Endothelial cell of umbilical vein (primary cell): ENCODE measurements at regions of chr2 and their contacts with region 1.

Region 1: GRCh38 chr2:83081826-83082690 is 1377.0 kb downstream of the SUCLG1 start:
- DNase-seq: peak; percentile 100
- H3K4me3 ChIP-seq: peak overlapping the region in 1 of 3 experiments; percentile 28
- H3K27ac ChIP-seq: peak overlapping the region; percentile 94
- H3K4me1 ChIP-seq: peaks cover 25% of the 10 kb centered on the region
- H3K27me3 ChIP-seq: no peaks in the 10 kb centered on the region
- CTCF ChIP-seq: no peak
- POLR2A ChIP-seq: peak; percentile 67

Region 2: GRCh38 chr2:82599021-82599420 is 483.0 kb before region 1 on chr2:
- CTCF ChIA-PET with region 1: no interaction called
- POLR2A ChIA-PET with region 1: no interaction called
- dilution Hi-C with region 1: no loop called
- intact Hi-C with region 1: loop called (anchors 5 kb)
- DNase-seq: no peak
- H3K4me3 ChIP-seq: no peak overlapping the region
- H3K27ac ChIP-seq: no peak overlapping the region
- H3K4me1 ChIP-seq: no peaks in the 10 kb centered on the region
- H3K27me3 ChIP-seq: no peaks in the 10 kb centered on the region
- CTCF ChIP-seq: no peak
- POLR2A ChIP-seq: no peak

Region 3: DNA sequence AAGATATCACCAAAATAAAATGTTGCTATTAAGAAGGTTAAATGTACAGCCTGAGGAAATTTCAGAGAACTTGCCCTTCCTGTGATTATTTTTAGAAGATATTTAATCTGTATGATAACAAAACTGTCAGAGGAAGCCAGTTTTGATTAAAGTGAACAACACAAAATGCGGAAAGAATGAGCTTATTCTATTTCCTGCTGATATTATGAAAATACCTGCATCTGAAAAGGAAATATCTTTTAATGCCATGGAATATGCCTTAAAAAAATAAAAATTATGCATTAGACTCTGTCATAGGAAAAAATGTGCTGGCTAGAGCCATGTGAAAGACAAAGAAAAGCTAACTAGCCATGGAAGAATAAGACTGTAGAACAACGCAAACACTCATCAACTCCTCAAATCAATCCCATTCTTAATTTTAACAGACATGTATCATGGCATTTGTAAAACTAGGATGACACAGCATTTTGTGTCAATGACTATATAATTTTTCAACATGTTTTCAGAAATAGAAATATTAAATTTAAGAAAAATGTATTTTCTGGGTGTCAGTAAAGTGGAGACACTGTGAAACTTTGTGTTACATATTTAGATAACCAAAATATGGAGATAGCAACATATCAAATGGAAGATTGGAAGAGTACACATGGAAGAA is 391.2 kb before region 1 on chr2:
- CTCF ChIA-PET with region 1: interaction called, 8 read pairs
- POLR2A ChIA-PET with region 1: no interaction called
- dilution Hi-C with region 1: no loop called
- intact Hi-C with region 1: loop called (anchors 1 kb)
- DNase-seq: peak; percentile 93
- H3K4me3 ChIP-seq: no peak overlapping the region
- H3K27ac ChIP-seq: peak overlapping the region; percentile 68
- H3K4me1 ChIP-seq: peaks cover 34% of the 10 kb centered on the region
- H3K27me3 ChIP-seq: no peaks in the 10 kb centered on the region
- CTCF ChIP-seq: no peak
- POLR2A ChIP-seq: peak; percentile 41

Region 4: GRCh38 chr2:82939211-82939610 is 142.8 kb before region 1 on chr2:
- CTCF ChIA-PET with region 1: no interaction called
- POLR2A ChIA-PET with region 1: no interaction called
- dilution Hi-C with region 1: no loop called
- intact Hi-C with region 1: no loop called
- DNase-seq: no peak
- H3K4me3 ChIP-seq: no peak overlapping the region
- H3K27ac ChIP-seq: no peak overlapping the region
- H3K4me1 ChIP-seq: no peaks in the 10 kb centered on the region
- H3K27me3 ChIP-seq: no peaks in the 10 kb centered on the region
- CTCF ChIP-seq: no peak
- POLR2A ChIP-seq: no peak

Region 5: GRCh38 chr2:83055338-83056010 is 26.6 kb before region 1 on chr2:
- CTCF ChIA-PET with region 1: interaction called, 4 read pairs
- POLR2A ChIA-PET with region 1: interaction called, 3 read pairs
- dilution Hi-C with region 1: no loop called
- intact Hi-C with region 1: loop called (anchors 1 kb)
- DNase-seq: peak; percentile 93
- H3K4me3 ChIP-seq: peak overlapping the region in 1 of 3 experiments; percentile 15
- H3K27ac ChIP-seq: peak overlapping the region; percentile 97
- H3K4me1 ChIP-seq: peaks cover 36% of the 10 kb centered on the region
- H3K27me3 ChIP-seq: no peaks in the 10 kb centered on the region
- CTCF ChIP-seq: no peak
- POLR2A ChIP-seq: no peak

Region 6: DNA sequence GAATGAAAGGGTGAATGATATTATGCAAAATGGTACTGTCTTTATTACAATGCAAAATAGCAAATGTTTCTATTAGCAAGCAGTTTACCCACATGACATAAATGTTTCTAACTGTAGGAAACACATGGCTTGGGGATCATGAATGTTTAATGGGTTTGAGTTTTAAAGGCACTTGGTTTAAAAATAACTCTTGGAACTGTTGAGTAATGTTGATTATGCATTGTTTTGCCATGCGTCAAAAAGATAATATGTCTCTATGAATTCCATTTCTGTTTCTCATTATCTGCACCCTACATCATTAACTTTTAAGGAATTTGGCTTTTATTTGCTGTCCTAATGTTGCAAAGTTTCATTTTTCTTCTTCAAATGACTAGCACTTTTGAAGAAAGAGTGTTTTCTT is 21.5 kb after region 1 on chr2:
- CTCF ChIA-PET with region 1: interaction called, 3 read pairs
- POLR2A ChIA-PET with region 1: no interaction called
- dilution Hi-C with region 1: no loop called
- intact Hi-C with region 1: loop called (anchors 1 kb)
- DNase-seq: peak; percentile 91
- H3K4me3 ChIP-seq: no peak overlapping the region
- H3K27ac ChIP-seq: peak overlapping the region; percentile 86
- H3K4me1 ChIP-seq: peaks cover 24% of the 10 kb centered on the region
- H3K27me3 ChIP-seq: no peaks in the 10 kb centered on the region
- CTCF ChIP-seq: no peak
- POLR2A ChIP-seq: no peak

Region 7: GRCh38 chr2:83323038-83323437 is 241.0 kb after region 1 on chr2:
- CTCF ChIA-PET with region 1: no interaction called
- POLR2A ChIA-PET with region 1: no interaction called
- dilution Hi-C with region 1: no loop called
- intact Hi-C with region 1: no loop called
- DNase-seq: no peak
- H3K4me3 ChIP-seq: no peak overlapping the region
- H3K27ac ChIP-seq: no peak overlapping the region
- H3K4me1 ChIP-seq: no peaks in the 10 kb centered on the region
- H3K27me3 ChIP-seq: no peaks in the 10 kb centered on the region
- CTCF ChIP-seq: no peak
- POLR2A ChIP-seq: no peak